GM12878 (cell line): ENCODE measurements at regions of chr7 and their contacts with region 1.

Region 1: GRCh38 chr7:126700807-126701604 is 551.7 kb downstream of the GRM8 start:
- DNase-seq: peak; percentile 98
- ATAC-seq: peak; percentile 89
- H3K4me3 ChIP-seq: 0 out of 2 replicates have a peak overlapping the region, but pooled peaks have one; percentile 35
- H3K27ac ChIP-seq: peak overlapping the region; percentile 96
- H3K4me1 ChIP-seq: peaks cover 31% of the 10 kb centered on the region
- H3K27me3 ChIP-seq: no peaks in the 10 kb centered on the region
- CTCF ChIP-seq: no peak
- EP300 ChIP-seq: peak; percentile 97 to 99
- POLR2A ChIP-seq: peak; percentile 77
- RAD21 ChIP-seq: peak; percentile 28

Region 2: DNA sequence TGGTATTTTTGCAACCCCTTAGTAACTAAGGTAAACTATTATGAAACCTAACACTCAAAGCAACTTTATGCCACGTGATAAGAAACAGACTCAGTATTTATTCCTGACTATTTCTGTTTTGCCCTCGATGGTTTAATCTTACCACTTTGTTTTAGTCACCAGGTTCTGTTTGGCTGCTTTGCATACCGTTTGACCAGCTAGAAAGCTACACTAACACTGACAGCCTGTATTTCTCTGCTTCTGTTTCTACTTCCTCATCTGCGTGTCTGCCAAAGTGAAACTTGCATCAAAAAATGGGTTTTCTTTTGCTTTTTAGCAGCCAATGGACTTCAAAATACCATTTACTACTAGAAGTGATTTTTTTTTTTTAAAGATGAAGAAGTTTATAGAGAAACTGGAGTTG is 250.7 kb before region 1 on chr7:
- CTCF ChIA-PET with region 1: interaction called, 4 read pairs
- POLR2A ChIA-PET with region 1: interaction called, 10 read pairs
- RAD21 ChIA-PET with region 1: interaction called, 22 read pairs
- SMC1A ChIA-PET with region 1: interaction called, 26 read pairs
- in situ Hi-C with region 1: no loop called
- intact Hi-C with region 1: loop called (anchors 1 kb)
- DNase-seq: peak; percentile 75
- ATAC-seq: peak; percentile 96
- H3K4me3 ChIP-seq: peak overlapping the region; percentile 23; the same call in 1 of the 2 replicates
- H3K27ac ChIP-seq: peak overlapping the region; percentile 89
- H3K4me1 ChIP-seq: peaks cover 28% of the 10 kb centered on the region
- H3K27me3 ChIP-seq: no peaks in the 10 kb centered on the region
- CTCF ChIP-seq: no peak
- EP300 ChIP-seq: peak in 1 of 2 experiments; percentile 72; a peak in 2 of 4 replicates
- POLR2A ChIP-seq: no peak
- RAD21 ChIP-seq: no peak

Region 3: DNA sequence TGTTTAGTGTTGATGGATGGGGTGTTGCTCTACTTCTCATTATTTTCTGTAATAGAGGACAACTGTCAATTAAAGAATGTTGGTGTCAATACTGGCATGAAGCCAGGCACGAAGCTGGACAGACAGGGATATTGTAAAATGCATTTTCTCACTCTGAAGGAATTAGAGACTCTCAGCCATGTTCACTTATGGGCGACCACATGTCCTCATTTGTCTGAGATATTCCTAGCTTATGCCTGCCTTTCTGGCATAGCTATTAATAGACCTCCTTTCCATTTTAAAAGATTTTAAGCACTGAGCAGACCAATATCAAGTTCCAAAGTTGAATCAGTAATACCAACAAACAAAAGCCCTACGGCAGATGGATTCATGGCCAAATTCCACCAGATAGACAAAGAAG is 38.2 kb before region 1 on chr7:
- CTCF ChIA-PET with region 1: interaction called, 14 read pairs
- POLR2A ChIA-PET with region 1: interaction called, 19 read pairs
- RAD21 ChIA-PET with region 1: interaction called, 189 read pairs
- SMC1A ChIA-PET with region 1: interaction called, 122 read pairs
- in situ Hi-C with region 1: no loop called
- intact Hi-C with region 1: loop called (anchors 1 kb)
- DNase-seq: no peak
- ATAC-seq: no peak
- H3K4me3 ChIP-seq: no peak overlapping the region
- H3K27ac ChIP-seq: no peak overlapping the region
- H3K4me1 ChIP-seq: peaks cover 20% of the 10 kb centered on the region
- H3K27me3 ChIP-seq: no peaks in the 10 kb centered on the region
- CTCF ChIP-seq: no peak
- EP300 ChIP-seq: no peak
- POLR2A ChIP-seq: no peak
- RAD21 ChIP-seq: no peak

Region 4: GRCh38 chr7:126715076-126715475 is 14.1 kb after region 1 on chr7:
- CTCF ChIA-PET with region 1: interaction called, 43 read pairs
- POLR2A ChIA-PET with region 1: interaction called, 9 read pairs
- RAD21 ChIA-PET with region 1: interaction called, 118 read pairs
- SMC1A ChIA-PET with region 1: interaction called, 115 read pairs
- in situ Hi-C with region 1: no loop called
- intact Hi-C with region 1: loop called (anchors 1 kb)
- DNase-seq: no peak
- ATAC-seq: no peak
- H3K4me3 ChIP-seq: no peak overlapping the region
- H3K27ac ChIP-seq: no peak overlapping the region
- H3K4me1 ChIP-seq: peaks cover 6% of the 10 kb centered on the region; the same call in 1 of the 2 replicates
- H3K27me3 ChIP-seq: no peaks in the 10 kb centered on the region
- CTCF ChIP-seq: no peak
- EP300 ChIP-seq: no peak
- POLR2A ChIP-seq: no peak
- RAD21 ChIP-seq: no peak

Region 5: GRCh38 chr7:126720232-126720631 is 19.2 kb after region 1 on chr7:
- CTCF ChIA-PET with region 1: interaction called, 43 read pairs
- POLR2A ChIA-PET with region 1: interaction called, 9 read pairs
- RAD21 ChIA-PET with region 1: interaction called, 118 read pairs
- SMC1A ChIA-PET with region 1: interaction called, 115 read pairs
- in situ Hi-C with region 1: no loop called
- intact Hi-C with region 1: loop called (anchors 1 kb)
- DNase-seq: no peak
- ATAC-seq: peak; percentile 91
- H3K4me3 ChIP-seq: no peak overlapping the region
- H3K27ac ChIP-seq: peak overlapping the region; percentile 46; the same call in 1 of the 2 replicates
- H3K4me1 ChIP-seq: peaks cover 11% of the 10 kb centered on the region
- H3K27me3 ChIP-seq: no peaks in the 10 kb centered on the region
- CTCF ChIP-seq: no peak
- EP300 ChIP-seq: peak; percentile 29 to 54; a peak in 2 of 4 replicates
- POLR2A ChIP-seq: no peak
- RAD21 ChIP-seq: no peak

Region 6: DNA sequence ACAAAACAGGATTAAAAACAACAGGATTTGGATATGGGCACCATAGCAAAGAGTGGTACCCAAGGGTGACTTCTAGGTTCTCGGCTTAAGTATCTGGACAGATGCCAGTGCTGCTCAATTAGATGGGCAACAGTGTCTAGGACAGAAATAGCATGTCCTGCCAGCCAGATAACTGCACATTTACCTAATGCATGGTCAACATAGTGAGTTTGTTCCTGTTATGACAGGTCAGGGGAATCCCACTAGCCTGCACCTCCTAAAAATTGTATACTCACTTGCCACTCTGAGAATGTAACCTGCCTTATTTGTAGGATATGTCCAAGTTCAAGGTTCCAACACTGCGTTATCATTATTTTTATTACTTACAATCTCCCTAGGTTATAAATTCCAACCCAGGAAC is 80.0 kb after region 1 on chr7:
- CTCF ChIA-PET with region 1: no interaction called
- POLR2A ChIA-PET with region 1: no interaction called
- RAD21 ChIA-PET with region 1: interaction called, 3 read pairs
- SMC1A ChIA-PET with region 1: interaction called, 4 read pairs
- in situ Hi-C with region 1: no loop called
- intact Hi-C with region 1: loop called (anchors 5 kb)
- DNase-seq: peak; percentile 39
- ATAC-seq: peak; percentile 95
- H3K4me3 ChIP-seq: no peak overlapping the region
- H3K27ac ChIP-seq: no peak overlapping the region
- H3K4me1 ChIP-seq: no peaks in the 10 kb centered on the region
- H3K27me3 ChIP-seq: no peaks in the 10 kb centered on the region
- CTCF ChIP-seq: no peak
- EP300 ChIP-seq: no peak
- POLR2A ChIP-seq: no peak
- RAD21 ChIP-seq: no peak

Region 7: GRCh38 chr7:126819197-126819484 is 118.1 kb after region 1 on chr7:
- CTCF ChIA-PET with region 1: no interaction called
- POLR2A ChIA-PET with region 1: no interaction called
- RAD21 ChIA-PET with region 1: no interaction called
- SMC1A ChIA-PET with region 1: no interaction called
- in situ Hi-C with region 1: no loop called
- intact Hi-C with region 1: no loop called
- DNase-seq: no peak
- ATAC-seq: no peak
- H3K4me3 ChIP-seq: no peak overlapping the region
- H3K27ac ChIP-seq: no peak overlapping the region
- H3K4me1 ChIP-seq: no peaks in the 10 kb centered on the region
- H3K27me3 ChIP-seq: no peaks in the 10 kb centered on the region
- CTCF ChIP-seq: no peak
- EP300 ChIP-seq: no peak
- POLR2A ChIP-seq: no peak
- RAD21 ChIP-seq: no peak

Region 8: GRCh38 chr7:126930166-126930565 is 229.2 kb after region 1 on chr7:
- CTCF ChIA-PET with region 1: no interaction called
- POLR2A ChIA-PET with region 1: no interaction called
- RAD21 ChIA-PET with region 1: no interaction called
- SMC1A ChIA-PET with region 1: no interaction called
- in situ Hi-C with region 1: no loop called
- intact Hi-C with region 1: no loop called
- DNase-seq: no peak
- ATAC-seq: no peak
- H3K4me3 ChIP-seq: no peak overlapping the region
- H3K27ac ChIP-seq: no peak overlapping the region
- H3K4me1 ChIP-seq: no peaks in the 10 kb centered on the region
- H3K27me3 ChIP-seq: no peaks in the 10 kb centered on the region
- CTCF ChIP-seq: no peak
- EP300 ChIP-seq: no peak
- POLR2A ChIP-seq: no peak
- RAD21 ChIP-seq: no peak